Calu3 (cell line): ENCODE measurements at regions of chr15 and their contacts with region 1.

Region 1: GRCh38 chr15:85412956-85413854 is 32.8 kb downstream of the AKAP13 start:
- DNase-seq: peak; percentile 79
- H3K4me3 Mint-ChIP-seq: peak overlapping the region; percentile 43
- H3K27ac Mint-ChIP-seq: peak overlapping the region; percentile 90
- H3K4me1 Mint-ChIP-seq: peaks cover 79% of the 10 kb centered on the region
- H3K27me3 Mint-ChIP-seq: no peaks in the 10 kb centered on the region
- CTCF ChIP-seq: no peak

Region 2: GRCh38 chr15:85402195-85402881 is 10.9 kb before region 1 on chr15:
- CTCF ChIA-PET with region 1: interaction called, 34 read pairs
- intact Hi-C with region 1: loop called (anchors 1 kb)
- DNase-seq: no peak
- H3K4me3 Mint-ChIP-seq: no peak overlapping the region
- H3K27ac Mint-ChIP-seq: peak overlapping the region; percentile 38
- H3K4me1 Mint-ChIP-seq: peaks cover 35% of the 10 kb centered on the region
- H3K27me3 Mint-ChIP-seq: no peaks in the 10 kb centered on the region
- CTCF ChIP-seq: no peak

Region 3: DNA sequence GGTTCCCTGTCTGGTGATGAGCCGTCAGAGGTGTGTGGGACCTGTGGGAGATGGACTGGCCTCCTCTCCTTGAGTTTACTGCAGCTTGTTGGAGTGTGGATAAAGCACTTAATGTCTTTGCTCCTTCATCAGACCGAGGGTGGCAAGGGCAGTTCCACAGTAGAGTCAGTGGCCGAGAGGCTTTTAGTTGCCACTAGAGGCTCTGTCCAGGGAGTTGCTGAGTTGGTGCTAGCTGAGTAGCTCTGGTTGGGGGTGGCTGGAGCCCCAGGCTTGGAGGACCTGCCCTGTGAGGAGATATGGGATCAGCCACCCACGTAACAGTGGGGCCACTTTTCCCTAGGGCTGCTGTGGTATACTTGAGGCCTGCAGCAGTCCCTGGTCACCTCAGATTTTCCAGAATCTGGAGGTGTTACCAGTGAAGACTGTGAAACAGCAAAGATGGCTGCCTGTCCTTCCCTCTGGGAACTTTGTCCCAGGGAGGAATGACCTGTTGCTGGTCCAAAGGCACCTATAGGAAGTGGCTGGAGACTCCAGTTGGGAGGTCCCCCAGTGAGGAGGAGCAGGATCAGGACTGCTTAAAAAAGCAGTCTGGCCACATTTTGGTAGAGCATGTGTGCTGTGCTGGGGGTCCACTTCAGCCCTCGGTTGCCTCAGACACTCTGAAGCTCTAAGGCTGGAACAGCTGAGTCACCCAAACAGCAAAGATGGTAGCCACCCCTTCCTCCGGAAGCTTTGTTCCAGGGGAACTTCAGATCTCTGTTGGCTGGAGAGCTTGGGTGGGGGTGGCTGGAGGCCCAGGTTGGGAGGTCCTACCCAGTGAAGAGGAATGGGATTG is 40.0 kb after region 1 on chr15:
- CTCF ChIA-PET with region 1: no interaction called
- intact Hi-C with region 1: no loop called
- DNase-seq: no peak
- H3K4me3 Mint-ChIP-seq: no peak overlapping the region
- H3K27ac Mint-ChIP-seq: no peak overlapping the region
- H3K4me1 Mint-ChIP-seq: peaks cover 61% of the 10 kb centered on the region
- H3K27me3 Mint-ChIP-seq: no peaks in the 10 kb centered on the region
- CTCF ChIP-seq: no peak